Calu3 (cell line): ENCODE measurements at regions of chr4 and their contacts with region 1.

Region 1: DNA sequence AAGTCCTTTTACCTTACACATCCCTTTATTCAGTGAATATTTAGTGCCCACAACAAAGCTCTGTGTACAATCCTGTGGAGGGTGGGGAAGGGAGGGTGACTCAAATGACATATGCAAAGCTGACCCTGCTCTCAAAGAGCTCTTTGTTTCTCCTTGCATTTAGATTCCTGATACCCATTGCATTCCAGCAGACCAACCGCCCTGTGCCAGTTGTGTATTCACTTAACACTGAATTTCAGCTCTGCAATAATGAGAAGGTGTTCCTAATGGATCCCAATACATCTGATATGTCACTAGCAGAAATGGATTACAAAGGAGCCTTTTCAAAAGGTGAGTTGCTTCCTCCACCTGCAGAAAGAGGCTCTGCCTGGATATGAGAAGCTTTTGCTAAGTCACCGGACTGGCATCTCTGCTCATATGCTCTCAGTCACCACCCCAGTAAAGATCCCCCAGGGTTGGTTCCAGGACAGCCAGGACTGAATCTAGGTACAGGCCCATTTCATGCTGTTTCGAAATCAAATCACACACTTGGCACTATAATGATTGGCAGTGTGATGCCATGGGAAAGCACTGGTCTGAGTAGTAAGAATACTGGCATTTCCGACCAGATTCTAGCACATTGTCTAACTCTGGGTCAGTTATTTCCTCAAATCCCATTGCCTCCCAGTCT is 17.1 kb upstream of the ANXA3 start:
- DNase-seq: peak; percentile 74
- H3K4me3 Mint-ChIP-seq: peak overlapping the region; percentile 15
- H3K27ac Mint-ChIP-seq: peak overlapping the region; percentile 100
- H3K4me1 Mint-ChIP-seq: peaks cover 52% of the 10 kb centered on the region
- H3K27me3 Mint-ChIP-seq: no peaks in the 10 kb centered on the region
- CTCF ChIP-seq: no peak

Region 2: GRCh38 chr4:78551479-78552351 is 17.3 kb after region 1 on chr4 and contains the start of gene ANXA3:
- CTCF ChIA-PET with region 1: interaction called, 5 read pairs
- intact Hi-C with region 1: loop called (anchors 1 kb)
- DNase-seq: peak; percentile 77
- H3K4me3 Mint-ChIP-seq: peak within 1 kb of the TSS; percentile 86
- H3K27ac Mint-ChIP-seq: peak within 1 kb of the TSS; percentile 96
- H3K4me1 Mint-ChIP-seq: peaks cover 28% of the 10 kb centered on the region
- H3K27me3 Mint-ChIP-seq: no peaks in the 10 kb centered on the region
- CTCF ChIP-seq: no peak
- total RNA-seq, gene ANXA3: 158 and 188 TPM in 2 replicates

Region 3: GRCh38 chr4:78569291-78569821 is 34.9 kb after region 1 on chr4:
- CTCF ChIA-PET with region 1: interaction called, 8 read pairs
- intact Hi-C with region 1: loop called (anchors 1 kb)
- DNase-seq: peak; percentile 51
- H3K4me3 Mint-ChIP-seq: peak overlapping the region; percentile 2
- H3K27ac Mint-ChIP-seq: peak overlapping the region; percentile 99
- H3K4me1 Mint-ChIP-seq: peaks cover 42% of the 10 kb centered on the region
- H3K27me3 Mint-ChIP-seq: no peaks in the 10 kb centered on the region
- CTCF ChIP-seq: no peak

Region 4: GRCh38 chr4:78584863-78585547 is 50.6 kb after region 1 on chr4:
- CTCF ChIA-PET with region 1: no interaction called
- intact Hi-C with region 1: no loop called
- DNase-seq: no peak
- H3K4me3 Mint-ChIP-seq: no peak overlapping the region
- H3K27ac Mint-ChIP-seq: peak overlapping the region; percentile 60
- H3K4me1 Mint-ChIP-seq: peaks cover 31% of the 10 kb centered on the region
- H3K27me3 Mint-ChIP-seq: no peaks in the 10 kb centered on the region
- CTCF ChIP-seq: no peak

Region 5: DNA sequence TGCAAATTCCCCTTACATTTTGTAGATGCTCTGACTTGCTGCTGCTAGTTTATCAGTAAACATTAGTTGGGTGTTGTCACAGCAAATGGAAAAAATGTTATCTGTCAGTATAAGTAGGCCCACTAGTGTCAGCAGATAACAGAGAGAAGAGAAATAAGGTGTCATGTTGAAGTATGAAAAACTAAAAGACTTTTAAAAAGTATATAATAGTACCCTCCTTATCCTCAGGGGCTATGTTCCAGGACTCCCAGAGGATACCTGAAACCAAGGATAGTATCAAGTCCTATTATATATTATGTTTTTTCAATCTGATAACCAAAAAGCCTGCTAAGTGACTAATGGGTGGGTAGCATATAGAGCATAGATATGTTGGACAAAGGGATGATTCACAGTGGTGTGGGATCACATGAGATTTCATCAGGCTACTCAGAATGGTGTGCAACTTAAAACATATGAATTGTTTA is 230.1 kb after region 1 on chr4:
- CTCF ChIA-PET with region 1: no interaction called
- intact Hi-C with region 1: no loop called
- DNase-seq: no peak
- H3K4me3 Mint-ChIP-seq: no peak overlapping the region
- H3K27ac Mint-ChIP-seq: no peak overlapping the region
- H3K4me1 Mint-ChIP-seq: no peaks in the 10 kb centered on the region
- H3K27me3 Mint-ChIP-seq: no peaks in the 10 kb centered on the region
- CTCF ChIP-seq: no peak